Right ventricle myocardium superior (tissue), 1 donor: ENCODE measurements at regions of chr5 and their contacts with region 1.

Region 1: GRCh38 chr5:78294248-78295034 is at the start of gene AP3B1:
- DNase-seq: peak; percentile 100
- ATAC-seq: peak; percentile 97
- total RNA-seq, gene AP3B1: 20.2 TPM

Region 2: GRCh38 chr5:78090002-78090401 is 204.4 kb before region 1 on chr5:
- intact Hi-C with region 1: no loop called
- DNase-seq: no peak
- ATAC-seq: no peak

Region 3: DNA sequence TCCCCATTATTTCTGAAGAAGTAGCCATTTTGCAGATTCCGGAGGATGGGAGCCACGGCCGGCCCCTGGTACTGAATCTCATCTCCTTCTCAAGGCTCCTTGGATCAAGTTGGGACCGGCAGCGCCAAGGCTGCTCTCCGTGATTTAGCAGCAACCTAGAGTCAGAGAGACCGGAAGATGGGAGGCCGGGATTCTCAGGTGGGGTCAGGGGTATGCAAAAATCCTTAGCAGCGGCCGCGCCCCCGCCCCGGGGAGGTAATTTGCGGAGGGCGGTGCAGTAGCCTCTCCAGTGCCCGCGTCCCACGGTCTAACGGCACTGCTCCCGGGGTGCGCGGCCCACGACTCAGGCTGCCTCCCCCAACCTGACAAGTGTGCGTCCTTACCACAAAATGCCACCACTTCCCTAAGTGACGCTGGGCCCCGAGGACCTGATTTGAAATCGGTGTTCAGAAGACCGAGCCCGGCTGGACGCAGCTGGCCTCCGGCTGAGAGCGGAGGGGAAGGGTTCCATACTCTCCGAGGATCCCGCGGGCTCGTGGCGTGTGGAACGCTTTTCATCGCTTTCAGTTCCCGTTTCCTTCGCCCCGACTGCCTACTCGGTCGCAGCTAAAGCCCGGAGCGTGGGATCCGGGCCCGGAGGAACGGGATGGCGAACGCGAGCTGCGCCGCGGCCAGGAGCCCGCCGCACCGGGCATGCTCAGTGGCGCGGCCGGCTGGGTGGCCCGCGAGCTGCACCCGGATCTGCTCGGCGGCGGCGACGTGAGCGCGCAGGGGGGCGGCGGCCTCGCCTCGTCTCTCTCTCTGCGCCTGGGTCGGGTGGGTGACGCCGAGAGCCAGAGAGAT is 65.6 kb after region 1 on chr5 and contains the start of gene SCAMP1:
- intact Hi-C with region 1: loop called (anchors 2 kb)
- DNase-seq: peak; percentile 95
- ATAC-seq: peak; percentile 99
- total RNA-seq, gene SCAMP1: 25.9 TPM